ENCODE measurements at regions of chr1 and their contacts with region 1.

Region 1: GRCh38 chr1:186363891-186364290 is 11.2 kb downstream of the TPR start:
- DNase-seq: no peak
- H3K4me3 ChIP-seq: no peak overlapping the region
- H3K4me3 Mint-ChIP-seq: no peak overlapping the region
- H3K27ac ChIP-seq: no peak overlapping the region
- H3K27ac Mint-ChIP-seq: no peak overlapping the region
- H3K4me1 ChIP-seq: no peaks in the 10 kb centered on the region
- H3K4me1 Mint-ChIP-seq: peaks cover 11 to 30% (median 14%) of the 10 kb centered on the region in 3 donors
- H3K27me3 ChIP-seq: no peaks in the 10 kb centered on the region
- H3K27me3 Mint-ChIP-seq: no peaks in the 10 kb centered on the region

Region 2: GRCh38 chr1:186375088-186375953 is 11.4 kb after region 1 on chr1 and contains the starts of genes ODR4 and TPR:
- CTCF ChIA-PET with region 1: interaction called, 11 read pairs
- POLR2A ChIA-PET with region 1: interaction called, 4 read pairs
- DNase-seq: peak; percentile 95 to 98 (median 97)
- H3K4me3 ChIP-seq: peak within 1 kb of the TSS; percentile 94
- H3K4me3 Mint-ChIP-seq: peak within 1 kb of the TSS; percentile 92 to 99 (median 97)
- H3K27ac ChIP-seq: peak within 1 kb of the TSS; percentile 97
- H3K27ac Mint-ChIP-seq: peak within 1 kb of the TSS; percentile 94 to 100 (median 98)
- H3K4me1 ChIP-seq: peaks cover 37% of the 10 kb centered on the region
- H3K4me1 Mint-ChIP-seq: peaks cover 48 to 70% (median 63%) of the 10 kb centered on the region in 3 donors
- H3K27me3 ChIP-seq: no peaks in the 10 kb centered on the region
- H3K27me3 Mint-ChIP-seq: peaks cover 0 to 5% of the 10 kb centered on the region in 2 donors
- total RNA-seq, gene ODR4: 16.0 to 16.3 TPM
- total RNA-seq, gene TPR: 111 to 117 TPM

Measured in CD8-positive, alpha-beta memory T cell (primary cell).